Activated CD8-positive, alpha-beta memory T cell treated with anti-CD3 and anti-CD28 coated beads, Interleukin-2, amount 10 ng/mL, durations not matched to agents 7 days and 5 days (primary cell): ENCODE measurements at regions of chr14 and their contacts with region 1.

Region 1: GRCh38 chr14:22570132-22570949 is 18.7 kb downstream of the DAD1 start:
- DNase-seq: peak; percentile 94
- ATAC-seq: peak; percentile 85
- H3K4me3 Mint-ChIP-seq: peak overlapping the region; percentile 81
- H3K27ac Mint-ChIP-seq: peak overlapping the region; percentile 95
- H3K4me1 Mint-ChIP-seq: peaks cover 67% of the 10 kb centered on the region
- H3K27me3 Mint-ChIP-seq: no peaks in the 10 kb centered on the region

Region 2: GRCh38 chr14:21860172-21860571 is 710.2 kb before region 1 on chr14:
- CTCF ChIA-PET with region 1: interaction called, 11 read pairs
- DNase-seq: peak; percentile 55
- ATAC-seq: peak; percentile 52
- H3K4me3 Mint-ChIP-seq: peak overlapping the region; percentile 39
- H3K27ac Mint-ChIP-seq: no peak overlapping the region
- H3K4me1 Mint-ChIP-seq: peaks cover 5% of the 10 kb centered on the region
- H3K27me3 Mint-ChIP-seq: peaks cover 13% of the 10 kb centered on the region

Region 3: GRCh38 chr14:21997300-21997699 is 573.0 kb before region 1 on chr14:
- CTCF ChIA-PET with region 1: interaction called, 12 read pairs
- DNase-seq: peak; percentile 67
- ATAC-seq: peak; percentile 88
- H3K4me3 Mint-ChIP-seq: peak overlapping the region; percentile 93
- H3K27ac Mint-ChIP-seq: peak overlapping the region; percentile 97
- H3K4me1 Mint-ChIP-seq: peaks cover 29% of the 10 kb centered on the region
- H3K27me3 Mint-ChIP-seq: no peaks in the 10 kb centered on the region

Region 4: GRCh38 chr14:22536853-22537338 is 33.4 kb before region 1 on chr14:
- CTCF ChIA-PET with region 1: interaction called, 27 read pairs
- DNase-seq: peak; percentile 94
- ATAC-seq: peak; percentile 90
- H3K4me3 Mint-ChIP-seq: peak overlapping the region; percentile 73
- H3K27ac Mint-ChIP-seq: peak overlapping the region; percentile 99
- H3K4me1 Mint-ChIP-seq: peaks cover 96% of the 10 kb centered on the region
- H3K27me3 Mint-ChIP-seq: no peaks in the 10 kb centered on the region

Region 5: GRCh38 chr14:22653012-22653621 is 82.8 kb after region 1 on chr14:
- CTCF ChIA-PET with region 1: interaction called, 59 read pairs
- DNase-seq: peak; percentile 65
- ATAC-seq: peak; percentile 81
- H3K4me3 Mint-ChIP-seq: no peak overlapping the region
- H3K27ac Mint-ChIP-seq: no peak overlapping the region
- H3K4me1 Mint-ChIP-seq: peaks cover 18% of the 10 kb centered on the region
- H3K27me3 Mint-ChIP-seq: no peaks in the 10 kb centered on the region

Region 6: DNA sequence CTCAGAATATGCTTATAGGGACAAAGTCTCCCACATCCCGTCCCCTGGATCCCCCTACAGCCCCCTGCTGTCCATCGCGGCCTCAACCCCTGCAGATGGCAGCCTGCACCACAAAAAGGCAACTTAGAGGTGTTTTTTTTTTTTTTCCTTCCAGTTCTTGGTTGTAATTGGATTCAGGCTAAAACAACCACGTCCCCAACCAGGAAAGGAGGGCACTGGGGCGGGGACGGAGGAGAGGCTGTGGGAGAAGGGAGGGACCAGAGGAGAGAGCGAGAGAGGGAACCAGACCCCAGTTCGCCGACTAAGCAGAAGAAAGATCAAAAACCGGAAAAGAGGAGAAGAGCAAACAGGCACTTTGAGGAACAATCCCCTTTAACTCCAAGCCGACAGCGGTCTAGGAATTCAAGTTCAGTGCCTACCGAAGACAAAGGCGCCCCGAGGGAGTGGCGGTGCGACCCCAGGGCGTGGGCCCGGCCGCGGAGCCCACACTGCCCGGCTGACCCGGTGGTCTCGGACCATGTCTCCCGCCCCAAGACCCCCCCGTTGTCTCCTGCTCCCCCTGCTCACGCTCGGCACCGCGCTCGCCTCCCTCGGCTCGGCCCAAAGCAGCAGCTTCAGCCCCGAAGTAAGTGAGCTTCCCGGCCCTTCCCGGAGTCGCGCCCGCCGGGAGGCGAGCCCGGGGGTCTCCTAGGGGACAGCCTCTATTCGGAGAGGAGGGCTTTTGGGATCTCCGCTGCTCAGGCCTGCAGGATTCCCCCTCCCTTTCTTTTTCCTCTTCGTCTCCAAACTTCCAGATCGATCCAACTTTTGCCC is 266.2 kb after region 1 on chr14 and contains the start of gene MMP14:
- CTCF ChIA-PET with region 1: interaction called, 25 read pairs
- DNase-seq: no peak
- ATAC-seq: no peak
- H3K4me3 Mint-ChIP-seq: no peak within 1 kb of the TSS
- H3K27ac Mint-ChIP-seq: no peak within 1 kb of the TSS
- H3K4me1 Mint-ChIP-seq: peaks cover 14% of the 10 kb centered on the region
- H3K27me3 Mint-ChIP-seq: peaks cover 16% of the 10 kb centered on the region
- total RNA-seq, gene MMP14: 1.3 to 2.5 TPM